ENCODE measurements at regions of chr10 and their contacts with region 1.

Region 1: GRCh38 chr10:97736902-97737769 is at the start of gene ZFYVE27:
- DNase-seq: peak; percentile 95
- H3K4me3 Mint-ChIP-seq: peak within 1 kb of the TSS; percentile 85
- H3K27ac Mint-ChIP-seq: peak within 1 kb of the TSS; percentile 86
- H3K4me1 Mint-ChIP-seq: peaks cover 42% of the 10 kb centered on the region
- H3K27me3 Mint-ChIP-seq: no peaks in the 10 kb centered on the region
- total RNA-seq, gene ZFYVE27: 29.3 to 32.4 TPM

Region 2: GRCh38 chr10:97676770-97677581 is 60.2 kb before region 1 on chr10:
- CTCF ChIA-PET with region 1: interaction called, 11 read pairs
- POLR2A ChIA-PET with region 1: interaction called, 4 read pairs
- DNase-seq: peak; percentile 52
- H3K4me3 Mint-ChIP-seq: no peak overlapping the region
- H3K27ac Mint-ChIP-seq: no peak overlapping the region
- H3K4me1 Mint-ChIP-seq: peaks cover 17% of the 10 kb centered on the region
- H3K27me3 Mint-ChIP-seq: no peaks in the 10 kb centered on the region

Region 3: GRCh38 chr10:97714048-97714371 is 23.1 kb before region 1 on chr10:
- CTCF ChIA-PET with region 1: interaction called, 111 read pairs
- POLR2A ChIA-PET with region 1: interaction called, 20 read pairs
- DNase-seq: peak; percentile 65
- H3K4me3 Mint-ChIP-seq: peak overlapping the region; percentile 97
- H3K27ac Mint-ChIP-seq: peak overlapping the region; percentile 60
- H3K4me1 Mint-ChIP-seq: peaks cover 18% of the 10 kb centered on the region
- H3K27me3 Mint-ChIP-seq: peaks cover 26% of the 10 kb centered on the region

Region 4: DNA sequence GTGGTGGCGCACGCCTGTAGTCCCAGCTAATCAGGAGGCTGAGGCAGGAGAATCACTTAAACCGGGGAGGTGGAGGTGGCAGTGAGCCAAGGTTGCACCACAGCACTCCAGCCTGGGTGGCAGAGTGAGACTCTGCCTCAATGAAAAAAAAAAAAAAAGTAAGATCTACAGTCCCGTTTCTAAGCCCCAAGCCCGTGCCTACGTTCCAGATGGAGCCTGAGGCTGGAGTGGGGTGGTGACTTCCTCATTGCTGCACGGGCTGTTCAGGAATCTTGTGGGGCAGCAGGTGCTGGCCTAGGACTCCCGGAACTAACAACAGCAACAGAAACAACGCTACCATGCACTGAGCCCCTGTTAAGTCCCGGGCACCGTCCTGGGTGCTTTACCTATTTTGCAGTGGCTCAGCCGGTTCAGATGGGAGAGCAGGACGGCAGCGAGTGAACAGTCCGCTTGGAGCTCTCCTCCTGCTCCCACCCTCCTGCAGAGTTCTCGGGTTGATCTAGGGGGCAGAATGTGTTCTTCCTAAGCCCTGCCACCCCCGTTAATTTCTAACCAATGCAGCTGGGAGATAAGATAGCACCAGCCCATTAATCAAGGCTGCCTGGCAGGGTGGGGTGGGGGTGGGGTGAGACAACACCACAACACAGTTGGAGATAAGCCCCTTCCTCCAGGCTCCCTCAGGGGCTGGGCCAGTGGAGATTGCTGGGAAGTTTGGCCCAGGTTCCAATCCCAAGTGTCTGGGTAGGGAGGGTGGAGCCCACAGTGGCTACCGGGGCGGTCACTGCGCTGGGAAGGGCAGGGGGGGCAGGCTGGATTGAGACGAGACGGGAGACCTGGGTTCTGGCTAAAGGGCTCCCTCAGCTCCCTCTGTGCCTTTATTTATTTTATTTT is 51.7 kb after region 1 on chr10:
- CTCF ChIA-PET with region 1: no interaction called
- POLR2A ChIA-PET with region 1: no interaction called
- DNase-seq: no peak
- H3K4me3 Mint-ChIP-seq: no peak overlapping the region
- H3K27ac Mint-ChIP-seq: no peak overlapping the region
- H3K4me1 Mint-ChIP-seq: peaks cover 10% of the 10 kb centered on the region
- H3K27me3 Mint-ChIP-seq: peaks cover 15% of the 10 kb centered on the region

Region 5: DNA sequence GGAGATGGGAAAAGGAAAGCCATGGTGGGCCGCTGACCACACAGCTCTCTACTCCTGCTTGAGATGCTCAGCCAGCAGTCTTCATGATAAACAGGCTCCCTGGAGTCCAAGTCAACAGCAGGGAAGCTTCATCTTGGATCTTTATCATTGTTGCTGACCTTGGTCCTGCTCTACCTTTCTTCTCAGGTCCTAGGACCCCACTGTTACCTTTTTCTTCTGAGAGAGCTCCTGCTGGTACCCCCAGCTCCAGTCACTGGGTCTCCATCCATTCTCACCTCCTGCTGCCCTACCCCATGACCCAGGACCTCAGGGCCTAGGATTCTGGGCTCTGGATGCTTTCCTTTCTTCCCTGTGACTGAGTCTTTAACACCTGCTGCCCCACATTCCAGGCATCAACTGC is 298.5 kb after region 1 on chr10:
- CTCF ChIA-PET with region 1: no interaction called
- POLR2A ChIA-PET with region 1: no interaction called
- DNase-seq: no peak
- H3K4me3 Mint-ChIP-seq: no peak overlapping the region
- H3K27ac Mint-ChIP-seq: no peak overlapping the region
- H3K4me1 Mint-ChIP-seq: no peaks in the 10 kb centered on the region
- H3K27me3 Mint-ChIP-seq: peaks cover 81% of the 10 kb centered on the region

Region 6: DNA sequence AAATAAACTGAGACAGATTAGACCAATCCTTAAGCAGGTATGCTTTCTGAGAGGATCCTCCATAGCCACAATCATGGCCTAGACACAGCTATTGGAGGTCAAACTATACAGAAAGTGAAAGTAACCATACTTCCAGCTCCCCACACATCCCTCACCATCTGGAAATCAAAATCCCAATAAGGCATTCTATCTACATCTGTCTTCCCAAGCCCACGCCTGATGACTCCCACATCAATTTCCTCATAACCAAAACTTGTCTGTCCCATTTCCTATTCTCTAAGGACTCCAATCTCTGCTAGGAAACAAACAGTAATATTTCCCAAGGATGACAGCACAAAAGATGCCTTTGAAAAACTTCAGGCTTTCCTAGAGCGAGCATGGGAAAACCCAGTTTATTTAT is 956.9 kb after region 1 on chr10:
- CTCF ChIA-PET with region 1: no interaction called
- POLR2A ChIA-PET with region 1: no interaction called
- DNase-seq: no peak
- H3K4me3 Mint-ChIP-seq: no peak overlapping the region
- H3K27ac Mint-ChIP-seq: no peak overlapping the region
- H3K4me1 Mint-ChIP-seq: no peaks in the 10 kb centered on the region
- H3K27me3 Mint-ChIP-seq: no peaks in the 10 kb centered on the region

Measured in activated CD4-positive, alpha-beta memory T cell treated with anti-CD3 and anti-CD28 coated beads, Interleukin-2, amount 10 ng/mL, durations not matched to agents 7 days and 5 days (primary cell).